Activated T-helper 1 cell treated with anti-CD3 and anti-CD28 coated beads, Interleukin-12 subunit alpha, Interleukin-12 subunit beta, Interleukin-2, Interleukin-4 antibody, amounts not matched to agents 30 ng/mL and 10 ng/mL and 1 ng/mL, durations not matched to agents 14 hours and 24 hours and 36 hours (primary cell): ENCODE measurements at regions of chr5 and their contacts with region 1.

Region 1: GRCh38 chr5:6712577-6713275 is 506 bp upstream of the TENT4A start:
- DNase-seq: peak; percentile 97
- H3K4me3 Mint-ChIP-seq: peak overlapping the region; percentile 88
- H3K27ac Mint-ChIP-seq: peak overlapping the region; percentile 95
- H3K4me1 Mint-ChIP-seq: peaks cover 41% of the 10 kb centered on the region
- H3K27me3 Mint-ChIP-seq: no peaks in the 10 kb centered on the region

Region 2: GRCh38 chr5:5421961-5422818 is 1290.5 kb before region 1 on chr5 and contains the start of gene ICE1:
- intact Hi-C with region 1: loop called (anchors 1 kb)
- DNase-seq: peak; percentile 91
- H3K4me3 Mint-ChIP-seq: peak within 1 kb of the TSS; percentile 96
- H3K27ac Mint-ChIP-seq: peak within 1 kb of the TSS; percentile 98
- H3K4me1 Mint-ChIP-seq: peaks cover 18% of the 10 kb centered on the region
- H3K27me3 Mint-ChIP-seq: no peaks in the 10 kb centered on the region
- total RNA-seq, gene ICE1: 35.3 and 38.2 TPM in 2 replicates

Region 3: GRCh38 chr5:6496207-6496584 is 216.5 kb before region 1 on chr5:
- intact Hi-C with region 1: loop called (anchors 10 kb)
- DNase-seq: peak; percentile 13
- H3K4me3 Mint-ChIP-seq: no peak overlapping the region
- H3K27ac Mint-ChIP-seq: peak overlapping the region; percentile 8
- H3K4me1 Mint-ChIP-seq: peaks cover 43% of the 10 kb centered on the region
- H3K27me3 Mint-ChIP-seq: peaks cover 3% of the 10 kb centered on the region

Region 4: DNA sequence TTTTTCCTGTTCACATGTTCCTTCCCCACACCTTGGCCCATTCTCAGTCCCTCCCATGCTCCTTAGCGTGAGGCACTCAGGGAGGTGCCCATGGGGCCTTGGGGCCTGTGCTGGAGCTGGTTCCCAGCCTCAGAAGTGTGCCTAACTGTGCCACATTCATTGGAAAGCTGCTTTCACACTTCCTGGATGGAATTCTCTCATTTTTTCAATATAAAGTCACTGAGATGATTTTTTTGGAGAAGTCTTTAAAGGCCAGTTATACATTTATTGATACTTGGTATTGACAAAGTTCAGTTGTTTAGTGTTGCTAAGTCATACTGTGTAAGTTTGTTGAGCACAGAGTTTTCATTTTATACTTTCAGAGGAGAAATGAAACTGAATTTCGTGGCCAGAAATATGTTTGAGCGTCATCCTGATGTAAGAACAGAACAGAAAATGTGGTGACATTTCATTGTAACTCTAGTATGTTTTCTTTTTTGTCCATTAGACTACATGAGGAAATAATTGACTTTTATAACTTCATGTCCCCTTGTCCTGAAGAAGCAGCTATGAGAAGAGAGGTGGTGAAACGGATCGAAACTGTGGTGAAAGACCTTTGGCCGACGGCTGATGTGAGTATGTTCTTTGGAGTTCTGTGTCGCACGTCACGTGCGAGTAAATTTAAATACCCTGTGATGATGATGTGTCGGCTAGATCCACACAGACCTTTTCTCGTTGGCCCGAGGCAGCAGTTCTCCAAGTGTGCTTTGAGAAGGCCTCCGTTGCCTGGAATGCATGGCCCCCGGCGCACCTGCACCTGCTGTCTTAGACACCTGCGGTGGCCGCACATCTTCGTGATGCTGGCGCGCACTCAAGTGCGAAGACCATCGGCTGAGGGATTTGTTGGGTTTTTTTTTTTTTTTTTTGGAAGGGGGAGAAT is 24.6 kb after region 1 on chr5:
- intact Hi-C with region 1: loop called (anchors 1 kb)
- DNase-seq: no peak
- H3K4me3 Mint-ChIP-seq: peak overlapping the region; percentile 61
- H3K27ac Mint-ChIP-seq: peak overlapping the region; percentile 94
- H3K4me1 Mint-ChIP-seq: peaks cover 61% of the 10 kb centered on the region
- H3K27me3 Mint-ChIP-seq: no peaks in the 10 kb centered on the region

Region 5: DNA sequence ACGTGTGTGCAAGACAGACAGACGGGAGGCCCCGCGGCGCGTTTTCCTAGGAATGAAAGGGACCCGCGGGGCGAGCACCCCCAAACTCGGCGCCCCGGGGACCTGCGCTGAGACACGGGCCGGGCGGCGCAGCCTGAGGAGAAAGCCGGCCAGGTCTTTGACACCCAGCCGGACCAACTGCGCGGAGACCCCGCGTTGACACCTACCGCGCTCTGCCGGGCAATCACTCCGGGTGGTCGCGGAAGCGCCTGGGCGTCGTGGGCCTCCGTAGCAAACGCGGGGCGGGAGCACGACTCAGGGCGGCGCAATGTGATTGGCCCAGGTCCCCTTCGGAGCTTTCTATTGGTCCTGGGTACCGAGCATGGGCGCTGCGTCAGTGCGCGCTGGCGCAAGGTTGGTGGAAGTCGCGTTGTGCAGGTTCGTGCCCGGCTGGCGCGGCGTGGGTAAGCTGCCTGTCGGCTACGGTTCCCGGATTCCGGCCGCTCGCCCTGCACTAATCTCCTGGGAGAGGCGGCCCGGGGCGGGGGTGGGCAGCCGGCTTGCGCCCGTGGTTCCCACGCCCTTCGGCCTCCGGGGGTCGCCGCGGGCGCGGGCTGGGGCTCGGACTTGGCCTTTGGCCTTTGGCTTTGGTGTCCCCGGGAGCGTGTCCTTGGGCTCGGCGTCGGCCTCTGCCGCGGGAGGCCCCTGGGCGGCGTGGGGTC is 1156.2 kb after region 1 on chr5 and contains the starts of genes FASTKD3 and MTRR:
- intact Hi-C with region 1: loop called (anchors 5 kb)
- DNase-seq: peak; percentile 87
- H3K4me3 Mint-ChIP-seq: peak within 1 kb of the TSS; percentile 97
- H3K27ac Mint-ChIP-seq: peak within 1 kb of the TSS; percentile 89
- H3K4me1 Mint-ChIP-seq: peaks cover 73% of the 10 kb centered on the region
- H3K27me3 Mint-ChIP-seq: no peaks in the 10 kb centered on the region
- total RNA-seq, gene FASTKD3: 13.5 and 18.6 TPM in 2 replicates
- total RNA-seq, gene MTRR: 83.0 and 90.4 TPM in 2 replicates